ENCODE measurements at regions of chr4 and their contacts with region 1.

Region 1: DNA sequence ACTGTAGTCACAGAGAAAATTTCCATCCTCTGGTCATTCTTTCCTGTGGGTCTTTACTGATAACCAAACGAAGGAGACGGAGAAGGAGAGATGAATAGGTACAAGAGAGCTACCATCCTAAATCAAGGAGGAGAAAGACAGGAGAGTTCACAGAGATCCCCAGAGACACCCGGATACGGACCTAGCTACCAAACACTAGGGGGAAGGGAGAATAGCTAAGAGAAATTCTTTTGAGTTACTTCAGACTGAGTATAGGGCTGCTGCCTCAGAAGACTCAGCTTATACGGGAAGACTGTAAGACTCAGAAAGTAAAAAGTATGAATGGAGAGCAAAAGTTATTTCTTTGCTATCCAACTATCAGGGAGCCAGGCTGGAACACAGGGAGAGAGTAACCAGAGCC is 572.1 kb downstream of the C4orf33 start:
- DNase-seq: no peak
- H3K4me3 ChIP-seq: no peak overlapping the region
- H3K27ac ChIP-seq: no peak overlapping the region
- H3K4me1 ChIP-seq: no peaks in the 10 kb centered on the region
- H3K27me3 ChIP-seq: no peaks in the 10 kb centered on the region
- CTCF ChIP-seq: no peak

Region 2: DNA sequence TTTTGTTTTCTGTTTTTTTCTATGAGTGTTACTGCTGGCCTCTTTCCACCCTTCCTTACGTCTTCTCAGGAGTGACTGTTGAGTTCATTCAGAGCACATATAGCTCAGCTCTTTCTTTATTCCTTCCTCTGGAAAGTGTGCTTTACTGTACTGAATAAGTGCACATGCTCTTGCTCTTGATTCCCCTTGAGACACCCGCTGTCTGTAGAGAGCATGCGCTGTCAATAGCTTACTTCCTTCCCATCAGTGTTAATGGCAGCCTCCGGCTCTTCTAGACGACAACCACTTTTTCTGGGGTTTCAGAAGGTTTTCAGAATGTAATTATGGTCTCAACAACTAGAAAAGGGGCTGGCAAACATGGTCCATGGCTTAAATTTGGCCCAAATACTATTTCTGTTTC is 67.2 kb before region 1 on chr4:
- CTCF ChIA-PET with region 1: no interaction called
- POLR2A ChIA-PET with region 1: interaction called, 17 read pairs
- intact Hi-C with region 1: no loop called
- DNase-seq: no peak
- H3K4me3 ChIP-seq: no peak overlapping the region
- H3K27ac ChIP-seq: no peak overlapping the region
- H3K4me1 ChIP-seq: no peaks in the 10 kb centered on the region
- H3K27me3 ChIP-seq: no peaks in the 10 kb centered on the region
- CTCF ChIP-seq: no peak

Region 3: GRCh38 chr4:129623233-129623875 is 44.7 kb before region 1 on chr4:
- CTCF ChIA-PET with region 1: no interaction called
- POLR2A ChIA-PET with region 1: no interaction called
- intact Hi-C with region 1: no loop called
- DNase-seq: no peak
- H3K4me3 ChIP-seq: no peak overlapping the region
- H3K27ac ChIP-seq: no peak overlapping the region
- H3K4me1 ChIP-seq: no peaks in the 10 kb centered on the region
- H3K27me3 ChIP-seq: no peaks in the 10 kb centered on the region
- CTCF ChIP-seq: no peak

Region 4: DNA sequence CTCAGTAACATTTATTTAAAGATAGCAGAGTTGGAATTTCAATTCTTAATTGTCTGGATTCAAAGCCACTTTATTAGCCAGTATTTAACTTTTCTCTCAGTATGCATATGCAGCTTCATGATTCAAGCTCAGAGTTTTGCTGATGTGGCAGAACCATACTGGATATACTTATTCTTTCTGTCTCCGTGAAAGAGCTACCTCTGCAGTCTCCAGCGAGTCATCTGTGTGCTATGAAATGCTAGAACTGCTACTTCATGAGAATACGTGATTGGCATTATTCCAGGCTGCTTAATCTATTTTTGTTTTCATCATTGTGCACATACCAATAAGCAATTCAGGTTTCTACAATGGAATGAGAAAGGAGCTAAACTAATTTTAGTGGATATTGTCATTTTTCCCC is 171.6 kb after region 1 on chr4:
- CTCF ChIA-PET with region 1: no interaction called
- POLR2A ChIA-PET with region 1: no interaction called
- intact Hi-C with region 1: no loop called
- DNase-seq: no peak
- H3K4me3 ChIP-seq: no peak overlapping the region
- H3K27ac ChIP-seq: no peak overlapping the region
- H3K4me1 ChIP-seq: no peaks in the 10 kb centered on the region
- H3K27me3 ChIP-seq: no peaks in the 10 kb centered on the region
- CTCF ChIP-seq: no peak

Region 5: GRCh38 chr4:130080872-130081451 is 412.9 kb after region 1 on chr4:
- CTCF ChIA-PET with region 1: no interaction called
- POLR2A ChIA-PET with region 1: interaction called, 10 read pairs
- intact Hi-C with region 1: no loop called
- DNase-seq: no peak
- H3K4me3 ChIP-seq: no peak overlapping the region
- H3K27ac ChIP-seq: no peak overlapping the region
- H3K4me1 ChIP-seq: no peaks in the 10 kb centered on the region
- H3K27me3 ChIP-seq: no peaks in the 10 kb centered on the region
- CTCF ChIP-seq: no peak

Measured in PC-9 (cell line).